ENCODE measurements at regions of chr22 and their contacts with region 1.

Region 1: DNA sequence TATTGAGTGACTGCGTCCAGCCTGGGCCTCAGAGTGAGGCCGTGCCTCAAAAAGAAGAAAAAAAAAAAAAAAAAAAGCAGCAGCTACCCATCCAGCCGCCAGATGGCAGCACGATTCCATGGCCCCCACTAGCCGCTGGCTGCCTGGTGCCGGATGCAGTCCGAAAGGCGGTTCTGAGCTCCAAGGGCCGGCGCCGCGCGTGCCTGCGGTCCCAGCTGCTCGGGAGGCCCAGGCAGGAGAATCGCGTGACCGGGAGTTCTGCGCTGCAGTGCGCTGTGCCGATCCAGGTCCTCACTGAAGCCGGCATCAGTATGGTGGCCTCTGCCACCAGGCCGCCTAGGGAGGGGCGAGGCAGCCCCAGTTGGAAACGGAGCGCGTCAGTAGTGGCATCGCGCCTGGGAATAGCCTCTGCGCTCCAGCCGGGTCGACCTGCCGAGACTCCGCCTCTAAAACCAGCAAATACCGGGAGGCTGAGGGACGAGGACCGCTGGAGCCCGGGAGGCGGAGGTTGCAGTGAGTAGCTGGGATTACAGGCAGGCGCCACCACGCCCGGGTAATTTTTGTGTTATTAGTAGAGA is 19.3 kb downstream of the SCARF2 start:
- DNase-seq: peak; percentile 94 to 100 (median 99)
- ATAC-seq: peak; percentile 84
- H3K4me3 ChIP-seq: peak overlapping the region; percentile 32
- H3K27ac ChIP-seq: no peak overlapping the region
- H3K4me1 ChIP-seq: peaks cover 0 to 18% of the 10 kb centered on the region in 2 experiments; a peak in 3 of 5 replicates
- H3K27me3 ChIP-seq: peaks cover 21 to 32% of the 10 kb centered on the region in 2 experiments; a peak in 4 of 5 replicates
- CTCF ChIP-seq: peak; percentile 98 to 100 (median 99)
- EP300 ChIP-seq: peak; percentile 58; the same call in 1 of the 2 replicates
- POLR2A ChIP-seq: no peak
- RAD21 ChIP-seq: peak; percentile 100

Region 2: DNA sequence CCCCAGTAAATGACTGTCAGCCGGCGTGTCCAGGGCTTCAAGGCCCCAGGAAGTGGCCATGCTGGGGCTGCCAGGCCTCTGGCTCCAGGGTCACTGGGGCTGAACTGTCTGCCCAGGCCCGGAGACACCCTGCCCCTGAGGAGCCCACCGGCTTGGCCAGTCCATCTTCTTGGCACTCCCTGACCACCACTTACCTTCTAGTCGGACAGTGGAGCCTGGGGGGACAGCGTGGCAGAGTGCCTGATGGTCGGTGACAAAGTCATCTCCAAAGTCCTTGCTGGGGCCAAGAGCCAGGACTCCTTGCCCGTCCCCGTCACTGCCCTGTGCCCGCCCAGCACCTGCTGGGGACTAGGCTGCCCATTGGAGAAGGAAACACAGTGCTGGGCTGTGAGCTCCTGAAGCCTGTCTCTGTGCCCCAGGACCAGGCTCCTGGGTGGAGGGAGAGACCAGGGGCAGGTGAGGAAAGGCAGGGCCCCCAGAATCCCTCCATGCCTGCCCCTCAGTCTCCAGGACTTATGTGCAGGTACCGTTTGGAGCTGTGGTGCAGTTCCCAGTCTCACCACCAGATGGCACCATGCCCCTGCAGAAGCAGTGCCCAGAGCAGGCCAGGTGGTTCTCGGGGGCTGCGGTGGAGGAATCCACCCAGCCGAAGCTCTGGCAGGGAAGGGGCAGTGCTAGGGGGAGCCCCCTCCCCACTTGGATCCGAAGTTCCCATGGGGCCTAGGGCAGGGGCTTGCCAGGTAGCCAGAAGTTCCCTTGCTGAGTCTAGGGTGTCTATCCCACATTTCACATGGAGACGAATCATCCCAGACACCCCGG is 261.5 kb before region 1 on chr22:
- CTCF ChIA-PET with region 1: no interaction called
- POLR2A ChIA-PET with region 1: no interaction called
- in situ Hi-C with region 1: no loop called
- intact Hi-C with region 1: loop called (anchors 10 kb)
- DNase-seq: peak; percentile 96 to 100 (median 99)
- ATAC-seq: peak; percentile 89
- H3K4me3 ChIP-seq: no peak overlapping the region
- H3K27ac ChIP-seq: no peak overlapping the region
- H3K4me1 ChIP-seq: peaks cover 0 to 68% of the 10 kb centered on the region in 2 experiments; a peak in 2 of 5 replicates
- H3K27me3 ChIP-seq: peaks cover 33 to 74% of the 10 kb centered on the region in 2 experiments; a peak in 4 of 5 replicates
- CTCF ChIP-seq: peak; percentile 99 to 100 (median 100)
- EP300 ChIP-seq: peak; percentile 25; the same call in 1 of the 2 replicates
- POLR2A ChIP-seq: no peak
- RAD21 ChIP-seq: peak; percentile 100

Region 3: GRCh38 chr22:20305931-20306645 is 112.2 kb before region 1 on chr22:
- CTCF ChIA-PET with region 1: no interaction called
- POLR2A ChIA-PET with region 1: no interaction called
- in situ Hi-C with region 1: no loop called
- intact Hi-C with region 1: no loop called
- DNase-seq: peak; percentile 23 to 57 (median 52)
- ATAC-seq: no peak; the same call in 2 of the 3 replicates
- H3K4me3 ChIP-seq: no peak overlapping the region
- H3K27ac ChIP-seq: no peak overlapping the region
- H3K4me1 ChIP-seq: peaks cover 0 to 31% of the 10 kb centered on the region in 2 experiments; a peak in 2 of 5 replicates
- H3K27me3 ChIP-seq: peaks cover 49 to 86% of the 10 kb centered on the region in 2 experiments; a peak in 4 of 5 replicates
- CTCF ChIP-seq: no peak
- EP300 ChIP-seq: no peak
- POLR2A ChIP-seq: no peak
- RAD21 ChIP-seq: no peak

Region 4: DNA sequence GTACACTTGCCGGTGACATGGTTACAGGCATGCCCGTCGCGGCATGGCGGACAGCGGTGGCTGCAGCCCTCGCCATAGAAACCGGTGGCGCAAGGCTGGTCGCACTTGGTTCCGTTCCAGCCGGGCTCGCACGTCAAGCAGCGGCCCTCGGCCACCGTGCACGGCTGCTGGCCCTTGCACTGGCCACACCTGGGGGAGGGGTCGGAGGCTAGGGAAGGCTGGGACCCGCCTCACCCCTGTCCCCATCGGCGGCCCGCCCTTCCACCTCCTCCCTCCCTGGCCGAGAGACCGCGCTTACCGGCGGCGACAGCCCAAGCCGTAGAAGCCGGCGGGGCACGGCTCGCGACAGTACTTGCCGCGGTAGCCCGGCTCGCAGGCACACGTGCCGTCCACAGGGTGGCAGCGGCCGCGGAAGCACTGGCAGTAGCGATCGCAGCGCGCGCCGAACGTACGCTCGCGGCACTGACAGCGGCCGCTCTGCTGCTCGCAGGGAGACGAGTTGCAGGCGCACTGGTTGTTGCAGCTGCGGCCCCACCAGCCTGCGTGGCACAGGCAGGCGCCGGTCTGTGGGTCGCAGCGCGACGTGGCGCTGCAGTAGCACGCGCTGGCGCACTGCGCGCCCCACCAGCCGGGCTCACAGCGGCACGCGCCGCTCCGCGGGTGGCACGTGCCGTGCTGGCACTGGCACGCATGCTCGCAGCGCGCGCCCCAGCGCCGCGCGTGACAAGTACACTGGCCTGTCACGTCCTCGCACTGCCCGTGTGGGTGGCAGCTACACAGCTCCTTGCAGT is 12.6 kb after region 1 on chr22:
- CTCF ChIA-PET with region 1: interaction called, 3 read pairs
- POLR2A ChIA-PET with region 1: interaction called, 20 read pairs
- in situ Hi-C with region 1: no loop called
- intact Hi-C with region 1: no loop called
- DNase-seq: peak in 3 of 4 experiments; percentile 67 to 79 (median 77)
- ATAC-seq: no peak
- H3K4me3 ChIP-seq: no peak overlapping the region
- H3K27ac ChIP-seq: no peak overlapping the region
- H3K4me1 ChIP-seq: peaks cover 12 to 44% of the 10 kb centered on the region in 2 experiments
- H3K27me3 ChIP-seq: peaks cover 39 to 80% of the 10 kb centered on the region in 2 experiments
- CTCF ChIP-seq: peak; percentile 25 to 49 (median 33); a peak in 3 of 6 replicates
- EP300 ChIP-seq: no peak
- POLR2A ChIP-seq: no peak
- RAD21 ChIP-seq: no peak

Region 5: GRCh38 chr22:20495861-20496681 is 77.8 kb after region 1 on chr22:
- CTCF ChIA-PET with region 1: interaction called, 59 read pairs
- POLR2A ChIA-PET with region 1: interaction called, 6 read pairs
- in situ Hi-C with region 1: no loop called
- intact Hi-C with region 1: loop called (anchors 1 kb)
- DNase-seq: peak; percentile 100
- ATAC-seq: peak; percentile 97
- H3K4me3 ChIP-seq: peak overlapping the region; percentile 46
- H3K27ac ChIP-seq: peak overlapping the region; percentile 81
- H3K4me1 ChIP-seq: peaks cover 15 to 40% of the 10 kb centered on the region in 2 experiments
- H3K27me3 ChIP-seq: no peaks in the 10 kb centered on the region; a peak in 1 of 5 replicates
- CTCF ChIP-seq: peak; percentile 99 to 100 (median 99)
- EP300 ChIP-seq: peak; percentile 77
- POLR2A ChIP-seq: no peak
- RAD21 ChIP-seq: peak; percentile 92 to 98

Region 6: DNA sequence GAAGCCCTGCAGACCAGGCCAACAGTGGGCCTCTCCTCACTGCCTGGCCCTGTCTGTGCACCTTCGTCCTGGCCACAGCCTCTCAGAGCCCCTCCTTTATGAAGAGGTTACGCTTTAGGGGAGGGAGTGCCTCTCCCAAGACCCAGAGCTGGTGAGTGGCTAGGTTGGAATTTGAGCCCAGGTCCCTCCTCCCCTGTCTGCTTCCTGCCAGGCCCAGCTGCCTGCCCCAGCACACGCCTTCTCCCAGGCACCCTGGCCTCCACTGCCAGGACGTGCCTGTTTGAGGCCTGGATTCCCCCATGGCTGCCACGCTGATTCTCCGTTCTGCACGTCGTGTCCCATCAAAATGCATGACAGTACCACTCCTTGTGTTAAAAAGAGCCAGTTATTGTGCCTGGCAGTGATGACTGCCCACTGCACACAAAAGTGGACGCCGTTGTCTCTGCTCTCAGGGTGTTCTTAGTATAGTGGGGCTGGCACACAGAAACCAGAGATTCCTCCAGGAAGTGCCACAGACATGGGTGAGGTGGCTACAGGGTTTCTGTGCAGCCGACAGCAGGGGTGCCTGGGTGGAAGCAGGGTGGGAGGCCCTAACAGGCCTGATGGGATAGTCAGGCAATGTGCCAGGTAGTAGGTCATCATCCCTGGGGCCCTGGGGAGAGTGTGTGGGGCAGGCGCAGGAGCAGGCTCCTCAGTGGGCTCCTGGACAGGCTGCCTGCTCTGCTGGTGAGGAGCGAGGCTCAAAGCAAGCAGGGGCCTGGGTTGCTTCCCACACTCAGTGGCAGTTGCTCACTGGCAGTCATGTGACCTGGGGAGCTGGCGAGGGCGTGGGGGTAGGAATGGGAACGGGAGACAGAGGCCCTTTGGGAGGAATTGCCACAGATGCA is 113.3 kb after region 1 on chr22:
- CTCF ChIA-PET with region 1: no interaction called
- POLR2A ChIA-PET with region 1: no interaction called
- in situ Hi-C with region 1: no loop called
- intact Hi-C with region 1: no loop called
- DNase-seq: peak in 2 of 4 experiments; percentile 60 to 74
- ATAC-seq: peak; percentile 8; the same call in 2 of the 3 replicates
- H3K4me3 ChIP-seq: no peak overlapping the region
- H3K27ac ChIP-seq: no peak overlapping the region; the same call in 2 of the 3 replicates
- H3K4me1 ChIP-seq: peaks cover 9 to 52% of the 10 kb centered on the region in 2 experiments
- H3K27me3 ChIP-seq: no peaks in the 10 kb centered on the region
- CTCF ChIP-seq: no peak
- EP300 ChIP-seq: no peak
- POLR2A ChIP-seq: no peak
- RAD21 ChIP-seq: no peak

Region 7: GRCh38 chr22:20576251-20576816 is 158.0 kb after region 1 on chr22:
- CTCF ChIA-PET with region 1: interaction called, 35 read pairs
- POLR2A ChIA-PET with region 1: interaction called, 3 read pairs
- in situ Hi-C with region 1: loop called (anchors 5 kb)
- intact Hi-C with region 1: loop called (anchors 1 kb)
- DNase-seq: no peak
- ATAC-seq: no peak
- H3K4me3 ChIP-seq: no peak overlapping the region
- H3K27ac ChIP-seq: no peak overlapping the region; the same call in 2 of the 3 replicates
- H3K4me1 ChIP-seq: peaks cover 10 to 36% of the 10 kb centered on the region in 2 experiments
- H3K27me3 ChIP-seq: no peaks in the 10 kb centered on the region
- CTCF ChIP-seq: no peak
- EP300 ChIP-seq: no peak
- POLR2A ChIP-seq: 0 out of 2 replicates have a peak, but pooled peaks have one; percentile 18
- RAD21 ChIP-seq: no peak

Region 8: DNA sequence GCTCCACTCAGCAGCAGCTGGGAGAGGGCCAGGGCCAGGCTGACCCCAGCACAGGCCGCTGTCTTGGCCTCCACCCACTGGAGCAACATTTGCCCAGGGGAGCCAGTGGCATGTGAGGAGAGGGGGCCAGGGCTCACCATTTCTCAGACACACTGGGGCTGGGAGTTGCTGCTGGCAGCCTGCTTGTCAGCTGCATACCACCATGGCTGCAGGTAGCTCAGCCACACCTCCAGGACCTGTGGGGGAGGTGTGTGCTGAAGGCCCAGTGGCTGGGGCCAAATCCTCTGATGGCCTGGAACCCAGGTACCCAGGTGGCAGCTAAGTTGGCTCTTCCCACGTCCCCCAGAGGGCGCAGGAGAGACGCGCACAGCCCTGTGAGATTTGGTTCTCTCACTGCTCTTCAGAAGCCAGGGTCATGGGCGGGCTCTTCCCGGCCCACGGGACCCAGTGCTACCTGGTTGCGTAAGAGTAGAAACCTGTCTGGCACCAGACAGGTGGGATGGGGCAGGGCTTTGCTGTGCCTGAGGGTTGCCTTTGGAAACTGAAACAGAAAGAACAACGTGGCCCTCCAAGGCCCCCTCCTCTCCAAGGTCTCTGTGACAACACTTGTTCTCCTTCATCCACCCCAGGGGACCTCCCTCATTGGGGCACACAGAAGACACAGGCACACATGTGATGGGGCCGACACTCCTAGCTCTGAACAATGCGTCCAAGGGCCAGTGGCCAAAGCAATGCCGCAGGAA is 187.9 kb after region 1 on chr22:
- CTCF ChIA-PET with region 1: interaction called, 10 read pairs
- POLR2A ChIA-PET with region 1: no interaction called
- in situ Hi-C with region 1: no loop called
- intact Hi-C with region 1: no loop called
- DNase-seq: peak; percentile 92 to 97 (median 95)
- ATAC-seq: peak; percentile 83
- H3K4me3 ChIP-seq: no peak overlapping the region
- H3K27ac ChIP-seq: no peak overlapping the region
- H3K4me1 ChIP-seq: peaks cover 0 to 45% of the 10 kb centered on the region in 2 experiments; a peak in 2 of 5 replicates
- H3K27me3 ChIP-seq: peaks cover 58 to 99% of the 10 kb centered on the region in 2 experiments; a peak in 4 of 5 replicates
- CTCF ChIP-seq: peak; percentile 98 to 100 (median 99)
- EP300 ChIP-seq: peak; percentile 51
- POLR2A ChIP-seq: no peak
- RAD21 ChIP-seq: peak; percentile 96 to 100; a peak in 3 of 4 replicates

Region 9: GRCh38 chr22:20741634-20742581 is 323.6 kb after region 1 on chr22:
- CTCF ChIA-PET with region 1: interaction called, 10 read pairs
- POLR2A ChIA-PET with region 1: interaction called, 3 read pairs
- in situ Hi-C with region 1: no loop called
- intact Hi-C with region 1: loop called (anchors 5 kb)
- DNase-seq: peak; percentile 87 to 93 (median 90)
- ATAC-seq: peak; percentile 78
- H3K4me3 ChIP-seq: no peak overlapping the region
- H3K27ac ChIP-seq: no peak overlapping the region
- H3K4me1 ChIP-seq: no peaks in the 10 kb centered on the region
- H3K27me3 ChIP-seq: no peaks in the 10 kb centered on the region
- CTCF ChIP-seq: peak; percentile 94 to 100 (median 99)
- EP300 ChIP-seq: no peak
- POLR2A ChIP-seq: no peak
- RAD21 ChIP-seq: peak; percentile 54 to 86